ENCODE measurements at regions of chr16 and their contacts with region 1.

Region 1: GRCh38 chr16:75519881-75520280 is 16.0 kb downstream of the CHST5 start:
- DNase-seq: no peak
- ATAC-seq: no peak
- H3K4me3 ChIP-seq: no peak overlapping the region
- H3K27ac ChIP-seq: no peak overlapping the region
- H3K4me1 ChIP-seq: peaks cover 10% of the 10 kb centered on the region
- H3K27me3 ChIP-seq: no peaks in the 10 kb centered on the region
- CTCF ChIP-seq: no peak
- EP300 ChIP-seq: no peak
- POLR2A ChIP-seq: no peak
- RAD21 ChIP-seq: no peak

Region 2: DNA sequence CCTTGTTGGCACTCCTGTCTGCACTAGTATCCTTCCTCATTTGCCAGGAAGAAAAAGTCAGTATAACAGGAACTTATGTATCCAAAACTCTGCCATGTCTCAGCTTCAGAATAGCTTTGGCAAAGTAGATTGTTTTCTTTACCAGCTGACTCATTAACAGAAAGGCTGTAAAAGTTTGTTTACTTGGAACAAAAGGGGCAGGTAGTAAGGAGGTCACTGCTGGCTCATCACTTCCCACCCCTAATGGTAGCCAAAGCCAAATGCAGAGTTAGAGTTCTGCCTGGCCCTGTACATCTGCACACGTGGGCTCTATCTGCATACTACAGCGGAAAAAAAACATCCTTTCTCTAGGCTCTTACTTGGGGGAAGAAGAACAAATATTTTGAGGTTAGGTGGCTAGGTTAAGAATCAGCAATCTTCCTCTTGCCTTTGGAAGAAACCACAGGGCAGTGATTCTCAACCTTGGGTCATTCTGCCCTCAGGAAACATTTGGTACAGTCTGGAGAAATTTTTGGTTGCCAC is 177.5 kb before region 1 on chr16:
- CTCF ChIA-PET with region 1: no interaction called
- POLR2A ChIA-PET with region 1: no interaction called
- in situ Hi-C with region 1: no loop called
- intact Hi-C with region 1: no loop called
- DNase-seq: no peak
- ATAC-seq: no peak
- H3K4me3 ChIP-seq: no peak overlapping the region
- H3K27ac ChIP-seq: no peak overlapping the region
- H3K4me1 ChIP-seq: no peaks in the 10 kb centered on the region
- H3K27me3 ChIP-seq: no peaks in the 10 kb centered on the region
- CTCF ChIP-seq: no peak
- EP300 ChIP-seq: no peak
- POLR2A ChIP-seq: no peak
- RAD21 ChIP-seq: no peak

Region 3: GRCh38 chr16:75452464-75453190 is 67.3 kb before region 1 on chr16:
- CTCF ChIA-PET with region 1: no interaction called
- POLR2A ChIA-PET with region 1: no interaction called
- in situ Hi-C with region 1: no loop called
- intact Hi-C with region 1: no loop called
- DNase-seq: peak; percentile 47
- ATAC-seq: peak; percentile 59
- H3K4me3 ChIP-seq: no peak overlapping the region
- H3K27ac ChIP-seq: no peak overlapping the region
- H3K4me1 ChIP-seq: peaks cover 26% of the 10 kb centered on the region
- H3K27me3 ChIP-seq: no peaks in the 10 kb centered on the region
- CTCF ChIP-seq: no peak
- EP300 ChIP-seq: no peak
- POLR2A ChIP-seq: no peak
- RAD21 ChIP-seq: no peak

Region 4: GRCh38 chr16:75464130-75464918 is 55.6 kb before region 1 on chr16 and contains the start of gene TMEM170A:
- CTCF ChIA-PET with region 1: interaction called, 31 read pairs
- POLR2A ChIA-PET with region 1: interaction called, 12 read pairs
- in situ Hi-C with region 1: no loop called
- intact Hi-C with region 1: no loop called
- DNase-seq: peak; percentile 98
- ATAC-seq: peak; percentile 94
- H3K4me3 ChIP-seq: peak within 1 kb of the TSS; percentile 86 to 91 (median 91)
- H3K27ac ChIP-seq: peak within 1 kb of the TSS; percentile 80
- H3K4me1 ChIP-seq: peaks cover 66% of the 10 kb centered on the region
- H3K27me3 ChIP-seq: no peaks in the 10 kb centered on the region
- CTCF ChIP-seq: peak; percentile 100
- EP300 ChIP-seq: peak; percentile 20 to 46; a peak in 2 of 4 replicates
- POLR2A ChIP-seq: peak; percentile 96 to 98
- RAD21 ChIP-seq: peak; percentile 96
- total RNA-seq, gene TMEM170A: 39.7 and 44.7 TPM in 2 replicates

Region 5: GRCh38 chr16:75502916-75503605 is 16.8 kb before region 1 on chr16:
- CTCF ChIA-PET with region 1: no interaction called
- POLR2A ChIA-PET with region 1: interaction called, 8 read pairs
- in situ Hi-C with region 1: no loop called
- intact Hi-C with region 1: loop called (anchors 1 kb)
- DNase-seq: no peak
- ATAC-seq: no peak
- H3K4me3 ChIP-seq: no peak overlapping the region
- H3K27ac ChIP-seq: no peak overlapping the region
- H3K4me1 ChIP-seq: peaks cover 56% of the 10 kb centered on the region
- H3K27me3 ChIP-seq: peaks cover 0 to 14% of the 10 kb centered on the region in 2 experiments; a peak in 3 of 5 replicates
- CTCF ChIP-seq: no peak
- EP300 ChIP-seq: no peak
- POLR2A ChIP-seq: no peak
- RAD21 ChIP-seq: no peak

Region 6: GRCh38 chr16:75555707-75556430 is 36.0 kb after region 1 on chr16 and contains the start of gene TMEM231:
- CTCF ChIA-PET with region 1: no interaction called
- POLR2A ChIA-PET with region 1: interaction called, 20 read pairs
- in situ Hi-C with region 1: no loop called
- intact Hi-C with region 1: loop called (anchors 5 kb)
- DNase-seq: peak; percentile 91
- ATAC-seq: peak; percentile 94
- H3K4me3 ChIP-seq: peak within 1 kb of the TSS; percentile 68 to 85 (median 70)
- H3K27ac ChIP-seq: peak within 1 kb of the TSS; percentile 32
- H3K4me1 ChIP-seq: peaks cover 28% of the 10 kb centered on the region
- H3K27me3 ChIP-seq: peaks cover 0 to 12% of the 10 kb centered on the region in 2 experiments; a peak in 2 of 5 replicates
- CTCF ChIP-seq: no peak; the same call in none of the 2 replicates
- EP300 ChIP-seq: no peak
- POLR2A ChIP-seq: peak; percentile 28 to 31; a peak in 2 of 4 replicates
- RAD21 ChIP-seq: 0 out of 2 replicates have a peak, but pooled peaks have one; percentile 17
- total RNA-seq, gene TMEM231: 2.3 and 3.5 TPM in 2 replicates

Region 7: GRCh38 chr16:75593825-75594820 is 74.2 kb after region 1 on chr16:
- CTCF ChIA-PET with region 1: no interaction called
- POLR2A ChIA-PET with region 1: no interaction called
- in situ Hi-C with region 1: no loop called
- intact Hi-C with region 1: loop called (anchors 2 kb)
- DNase-seq: peak; percentile 87
- ATAC-seq: peak; percentile 97
- H3K4me3 ChIP-seq: peak overlapping the region in 2 of 3 experiments; percentile 10 to 42; a peak in 3 of 6 replicates
- H3K27ac ChIP-seq: peak overlapping the region; percentile 72
- H3K4me1 ChIP-seq: peaks cover 20% of the 10 kb centered on the region
- H3K27me3 ChIP-seq: no peaks in the 10 kb centered on the region
- CTCF ChIP-seq: 0 out of 2 replicates have a peak, but pooled peaks have one; percentile 3
- EP300 ChIP-seq: peak in 1 of 2 experiments; percentile 34; a peak in 2 of 4 replicates
- POLR2A ChIP-seq: no peak
- RAD21 ChIP-seq: no peak

Region 8: DNA sequence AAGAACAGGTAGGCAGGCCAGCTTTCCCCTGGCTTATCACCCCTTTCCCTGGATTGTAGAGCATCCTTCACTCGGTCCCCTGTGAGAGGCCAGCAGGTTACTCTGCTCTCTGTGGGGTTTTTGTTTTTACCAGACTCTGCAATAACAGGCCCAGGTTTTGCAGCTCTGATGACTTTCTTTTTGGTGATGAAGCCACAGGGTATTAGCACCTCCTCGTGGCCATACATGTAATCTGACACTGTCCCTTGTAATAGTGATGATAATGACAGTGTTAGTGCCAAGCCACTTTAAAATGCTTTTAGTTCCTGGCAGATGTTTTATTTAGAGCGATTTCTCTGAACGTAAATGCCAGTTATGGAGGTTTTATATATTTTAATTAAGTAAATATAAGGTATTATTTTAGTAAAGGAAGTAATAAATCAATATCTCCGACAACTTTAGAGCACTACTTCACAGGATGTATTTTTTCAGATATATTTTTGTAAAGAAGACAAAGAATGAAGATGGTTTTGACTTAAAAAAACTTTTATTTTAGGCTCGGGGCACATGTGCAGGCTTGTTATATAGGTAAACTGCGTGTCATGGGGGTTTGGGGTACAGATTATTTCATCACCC is 244.4 kb after region 1 on chr16:
- CTCF ChIA-PET with region 1: interaction called, 4 read pairs
- POLR2A ChIA-PET with region 1: no interaction called
- in situ Hi-C with region 1: no loop called
- intact Hi-C with region 1: loop called (anchors 1 kb)
- DNase-seq: peak; percentile 69
- ATAC-seq: peak; percentile 98
- H3K4me3 ChIP-seq: no peak overlapping the region
- H3K27ac ChIP-seq: no peak overlapping the region
- H3K4me1 ChIP-seq: no peaks in the 10 kb centered on the region
- H3K27me3 ChIP-seq: no peaks in the 10 kb centered on the region
- CTCF ChIP-seq: peak; percentile 91
- EP300 ChIP-seq: no peak
- POLR2A ChIP-seq: no peak
- RAD21 ChIP-seq: peak; percentile 86

Measured in HepG2 (cell line).